ENCODE measurements at regions of chr22 and their contacts with region 1.

Region 1: DNA sequence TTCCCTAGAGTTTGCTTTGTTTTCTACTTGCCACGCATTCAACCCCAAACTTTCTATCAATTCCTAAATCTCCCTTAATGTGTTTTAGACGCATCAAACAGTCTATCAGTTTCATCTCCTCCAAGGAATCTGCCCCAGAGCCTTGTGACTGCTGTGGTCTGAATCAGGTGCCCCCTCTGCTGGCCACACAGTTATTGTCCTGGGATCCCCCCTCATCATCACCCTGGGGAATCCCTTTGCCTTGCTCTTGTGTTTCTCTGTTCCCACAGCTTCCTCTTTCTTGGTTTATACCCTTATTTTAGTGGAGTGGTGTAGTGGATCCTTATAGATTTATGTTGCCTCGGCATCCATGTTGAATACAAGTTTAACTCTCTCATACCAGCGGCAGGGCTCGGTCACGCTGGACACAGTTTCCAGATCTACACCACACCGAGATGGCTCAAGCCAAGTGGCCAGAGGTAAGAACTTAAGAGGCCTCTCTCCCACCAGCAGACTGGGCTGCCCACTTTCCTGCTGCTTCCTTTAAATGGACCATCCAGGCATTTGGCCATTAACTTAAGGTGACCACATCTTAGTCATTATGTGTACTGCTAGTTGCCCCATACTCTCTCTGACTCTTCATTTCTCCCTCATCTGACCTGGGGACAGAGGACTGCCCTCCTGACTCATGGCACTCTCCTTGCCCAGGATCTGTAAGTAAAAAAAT is 8.2 kb downstream of the UPB1 start:
- DNase-seq: peak; percentile 76
- ATAC-seq: peak; percentile 70
- H3K4me3 Mint-ChIP-seq: no peak overlapping the region
- H3K27ac Mint-ChIP-seq: no peak overlapping the region
- H3K4me1 Mint-ChIP-seq: peaks cover 21% of the 10 kb centered on the region
- H3K27me3 Mint-ChIP-seq: peaks cover 11% of the 10 kb centered on the region

Region 2: GRCh38 chr22:24433813-24434470 is 69.3 kb before region 1 on chr22:
- CTCF ChIA-PET with region 1: interaction called, 72 read pairs
- DNase-seq: peak; percentile 79
- ATAC-seq: peak; percentile 68
- H3K4me3 Mint-ChIP-seq: peak overlapping the region; percentile 34
- H3K27ac Mint-ChIP-seq: peak overlapping the region; percentile 87
- H3K4me1 Mint-ChIP-seq: peaks cover 87% of the 10 kb centered on the region
- H3K27me3 Mint-ChIP-seq: peaks cover 2% of the 10 kb centered on the region

Region 3: GRCh38 chr22:24455751-24456426 is 47.4 kb before region 1 on chr22:
- CTCF ChIA-PET with region 1: no interaction called
- DNase-seq: no peak
- ATAC-seq: no peak
- H3K4me3 Mint-ChIP-seq: no peak overlapping the region
- H3K27ac Mint-ChIP-seq: no peak overlapping the region
- H3K4me1 Mint-ChIP-seq: peaks cover 12% of the 10 kb centered on the region
- H3K27me3 Mint-ChIP-seq: no peaks in the 10 kb centered on the region

Region 4: DNA sequence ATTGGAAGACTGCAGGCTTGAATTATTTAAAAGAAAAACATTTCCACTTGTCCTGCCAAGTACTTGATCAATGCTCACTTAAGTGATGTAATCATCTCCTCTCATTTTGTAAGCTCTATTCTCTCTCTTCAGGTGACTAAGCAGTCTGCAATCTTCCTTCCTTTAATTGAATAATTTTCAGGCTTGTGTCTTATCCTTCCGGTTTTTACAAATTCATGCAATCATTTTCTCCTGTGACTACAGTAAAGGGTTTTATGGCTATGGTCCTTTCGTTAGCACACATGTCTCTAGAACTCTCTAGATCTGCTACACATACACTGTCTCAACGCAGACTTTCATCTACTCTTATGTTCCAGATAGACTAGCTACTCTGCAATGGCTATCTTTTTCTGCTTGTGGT is 20.7 kb before region 1 on chr22:
- CTCF ChIA-PET with region 1: interaction called, 12 read pairs
- DNase-seq: no peak
- ATAC-seq: no peak
- H3K4me3 Mint-ChIP-seq: no peak overlapping the region
- H3K27ac Mint-ChIP-seq: no peak overlapping the region
- H3K4me1 Mint-ChIP-seq: peaks cover 32% of the 10 kb centered on the region
- H3K27me3 Mint-ChIP-seq: peaks cover 12% of the 10 kb centered on the region